Thyroid gland (tissue), 4 donors: ENCODE measurements at regions of chr12 and their contacts with region 1.

Region 1: GRCh38 chr12:52167954-52168717 is 23.7 kb downstream of the KRT80 start:
- DNase-seq: no peak
- H3K4me3 ChIP-seq: no peak overlapping the region
- H3K27ac ChIP-seq: no peak overlapping the region
- H3K4me1 ChIP-seq: peaks cover 0 to 24% of the 10 kb centered on the region in 2 donors
- H3K27me3 ChIP-seq: no peaks in the 10 kb centered on the region
- CTCF ChIP-seq: no peak
- POLR2A ChIP-seq: no peak

Region 2: GRCh38 chr12:52210186-52210940 is 42.2 kb after region 1 on chr12:
- intact Hi-C with region 1: loop called (anchors 2 kb)
- DNase-seq: peak; percentile 48 to 52
- H3K4me3 ChIP-seq: no peak overlapping the region
- H3K27ac ChIP-seq: peak overlapping the region in 2 of 3 donors; percentile 17 to 29
- H3K4me1 ChIP-seq: peaks cover 15 to 39% of the 10 kb centered on the region in 2 donors
- H3K27me3 ChIP-seq: no peaks in the 10 kb centered on the region
- CTCF ChIP-seq: no peak
- POLR2A ChIP-seq: no peak